ENCODE measurements at regions of chr1 and their contacts with region 1.

Region 1: GRCh38 chr1:232950197-232951176 is at the start of gene NTPCR:
- DNase-seq: peak; percentile 98
- H3K4me3 Mint-ChIP-seq: peak within 1 kb of the TSS; percentile 89
- H3K27ac Mint-ChIP-seq: peak within 1 kb of the TSS; percentile 84
- H3K4me1 Mint-ChIP-seq: peaks cover 37% of the 10 kb centered on the region
- H3K27me3 Mint-ChIP-seq: no peaks in the 10 kb centered on the region
- CTCF ChIP-seq: peak; percentile 20
- total RNA-seq, gene NTPCR: 116 and 129 TPM in 2 replicates

Region 2: GRCh38 chr1:232635778-232636356 is 314.6 kb before region 1 on chr1:
- CTCF ChIA-PET with region 1: interaction called, 12 read pairs
- POLR2A ChIA-PET with region 1: interaction called, 14 read pairs
- intact Hi-C with region 1: loop called (anchors 1 kb)
- DNase-seq: peak; percentile 81
- H3K4me3 Mint-ChIP-seq: no peak overlapping the region
- H3K27ac Mint-ChIP-seq: no peak overlapping the region
- H3K4me1 Mint-ChIP-seq: peaks cover 6% of the 10 kb centered on the region
- H3K27me3 Mint-ChIP-seq: no peaks in the 10 kb centered on the region
- CTCF ChIP-seq: peak; percentile 76

Region 3: GRCh38 chr1:232868793-232869491 is 81.5 kb before region 1 on chr1:
- CTCF ChIA-PET with region 1: interaction called, 3 read pairs
- POLR2A ChIA-PET with region 1: interaction called, 24 read pairs
- intact Hi-C with region 1: loop called (anchors 5 kb)
- DNase-seq: peak; percentile 100
- H3K4me3 Mint-ChIP-seq: no peak overlapping the region
- H3K27ac Mint-ChIP-seq: peak overlapping the region; percentile 79
- H3K4me1 Mint-ChIP-seq: peaks cover 21% of the 10 kb centered on the region
- H3K27me3 Mint-ChIP-seq: no peaks in the 10 kb centered on the region
- CTCF ChIP-seq: no peak

Region 4: DNA sequence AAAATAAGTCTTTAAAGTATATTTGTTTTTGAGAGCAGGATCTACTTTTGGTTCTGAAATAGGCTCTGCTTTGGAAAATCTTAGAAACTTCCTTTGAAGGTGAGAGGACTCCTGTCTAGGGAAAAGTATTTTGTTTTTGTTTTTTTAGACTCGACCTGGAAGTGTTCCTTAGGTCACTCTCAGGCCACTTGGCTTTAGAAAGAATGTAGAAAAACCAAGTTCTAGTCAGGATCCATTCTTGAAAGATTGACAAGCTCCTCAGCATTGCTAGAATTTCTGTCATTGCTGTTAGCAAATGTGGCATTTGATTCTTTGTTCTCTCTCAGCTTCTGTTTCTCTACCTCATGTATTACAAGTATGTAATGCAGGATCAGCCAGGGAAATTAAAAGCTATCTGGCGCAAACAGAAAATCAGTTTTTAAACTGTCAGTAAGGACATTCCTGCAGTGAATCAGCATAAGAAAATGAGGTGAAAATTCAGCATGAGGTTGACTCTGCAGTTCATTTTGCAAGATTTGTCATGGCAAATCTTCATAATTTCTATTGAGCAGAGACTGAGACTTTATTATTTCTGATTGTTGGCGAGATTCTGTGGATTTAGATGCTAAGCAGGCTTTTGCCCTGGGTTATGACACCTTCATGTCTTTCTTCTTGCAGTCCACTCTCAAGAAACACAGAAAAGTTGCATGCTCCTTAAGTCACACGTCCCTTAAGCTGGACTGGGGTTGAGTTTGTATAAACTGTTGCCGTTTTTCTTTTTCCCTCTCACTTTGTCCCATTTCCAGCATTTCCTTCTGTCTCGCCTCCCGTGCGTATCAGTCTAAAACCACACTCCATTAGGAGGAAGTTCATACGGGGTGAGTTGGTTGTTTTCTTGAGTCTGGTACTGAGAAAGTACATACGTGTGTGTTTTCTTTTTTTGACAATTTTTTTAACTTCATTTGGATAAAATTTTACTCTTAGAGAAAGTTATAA is 12.6 kb after region 1 on chr1:
- CTCF ChIA-PET with region 1: interaction called, 11 read pairs
- POLR2A ChIA-PET with region 1: interaction called, 14 read pairs
- intact Hi-C with region 1: no loop called
- DNase-seq: no peak
- H3K4me3 Mint-ChIP-seq: no peak overlapping the region
- H3K27ac Mint-ChIP-seq: peak overlapping the region; percentile 24
- H3K4me1 Mint-ChIP-seq: peaks cover 16% of the 10 kb centered on the region
- H3K27me3 Mint-ChIP-seq: no peaks in the 10 kb centered on the region
- CTCF ChIP-seq: no peak

Region 5: GRCh38 chr1:233113009-233113879 is 162.8 kb after region 1 on chr1:
- CTCF ChIA-PET with region 1: no interaction called
- POLR2A ChIA-PET with region 1: interaction called, 15 read pairs
- intact Hi-C with region 1: loop called (anchors 1 kb)
- DNase-seq: peak; percentile 100
- H3K4me3 Mint-ChIP-seq: peak overlapping the region; percentile 62
- H3K27ac Mint-ChIP-seq: peak overlapping the region; percentile 90
- H3K4me1 Mint-ChIP-seq: peaks cover 63% of the 10 kb centered on the region
- H3K27me3 Mint-ChIP-seq: no peaks in the 10 kb centered on the region
- CTCF ChIP-seq: no peak

Region 6: DNA sequence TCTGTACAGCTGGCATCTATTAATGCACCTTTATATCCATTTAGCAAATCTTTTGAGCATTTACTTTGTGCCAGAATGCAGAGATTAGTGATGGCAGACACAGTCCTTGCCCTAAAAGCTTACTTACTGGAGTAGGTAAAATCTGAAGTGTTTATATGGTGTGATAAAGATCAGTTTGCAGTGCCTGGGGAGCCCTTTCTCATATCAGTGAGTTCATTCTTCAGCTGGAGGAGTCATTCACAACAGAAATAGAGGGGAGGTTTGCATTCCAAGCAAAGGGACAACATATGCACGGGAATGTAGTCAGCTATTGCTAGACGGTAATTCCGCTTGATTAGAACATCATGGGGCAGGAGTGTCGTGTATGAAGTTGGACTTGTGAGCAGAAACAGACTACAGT is 962.4 kb after region 1 on chr1:
- CTCF ChIA-PET with region 1: no interaction called
- POLR2A ChIA-PET with region 1: no interaction called
- intact Hi-C with region 1: no loop called
- DNase-seq: no peak
- H3K4me3 Mint-ChIP-seq: no peak overlapping the region
- H3K27ac Mint-ChIP-seq: no peak overlapping the region
- H3K4me1 Mint-ChIP-seq: peaks cover 25% of the 10 kb centered on the region
- H3K27me3 Mint-ChIP-seq: no peaks in the 10 kb centered on the region
- CTCF ChIP-seq: no peak